ENCODE measurements at regions of chr13 and their contacts with region 1.

Region 1: GRCh38 chr13:41678249-41678648 is 220.9 kb downstream of the RGCC start:
- DNase-seq: no peak

Region 2: DNA sequence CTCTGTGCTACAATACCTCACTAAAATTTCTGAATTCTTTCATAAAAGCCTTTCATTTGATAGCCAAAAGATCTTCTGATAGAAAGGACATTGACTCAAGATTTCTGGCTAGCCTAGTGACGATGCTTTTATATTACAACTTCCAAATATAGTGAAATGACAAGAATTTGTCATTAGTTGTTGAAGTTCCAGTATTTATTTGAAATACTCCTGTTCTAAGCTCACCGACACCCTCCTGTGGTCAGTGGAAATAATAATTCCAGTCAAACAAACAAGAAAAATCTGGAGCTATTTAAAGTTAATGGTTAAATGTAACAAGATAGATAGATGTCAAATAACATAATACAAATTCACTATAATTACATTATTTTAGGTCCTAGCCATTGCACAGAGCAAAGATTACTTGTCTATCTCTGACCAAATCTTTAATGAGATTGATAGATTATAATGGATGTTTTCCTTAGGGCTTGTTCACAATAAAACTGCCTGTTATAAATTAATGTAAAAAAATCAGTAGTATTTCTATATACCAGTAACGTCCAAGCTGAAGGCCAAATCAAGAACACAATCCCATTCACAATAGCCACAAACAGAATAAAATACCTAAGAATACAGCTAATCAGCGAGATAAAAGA is 25.4 kb before region 1 on chr13:
- intact Hi-C with region 1: no loop called
- DNase-seq: no peak

Region 3: DNA sequence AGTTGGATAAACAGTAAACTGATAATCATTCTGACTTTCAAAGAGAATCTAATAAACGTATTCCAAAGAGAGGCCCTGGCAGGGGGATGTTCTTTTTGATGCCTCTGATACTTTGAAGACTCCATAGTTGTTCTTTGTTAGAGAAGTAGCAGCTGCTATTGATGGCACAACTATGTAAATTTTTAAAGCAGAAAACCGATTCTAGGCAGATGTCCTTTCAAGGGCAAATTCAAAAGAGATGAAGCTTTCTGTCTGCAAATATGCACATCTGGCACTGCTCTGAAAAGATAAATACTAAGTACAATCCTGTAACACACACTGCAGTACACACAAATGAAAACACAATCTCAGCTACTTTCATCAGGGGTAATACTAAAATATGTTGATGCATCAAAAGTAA is 32.5 kb after region 1 on chr13:
- intact Hi-C with region 1: loop called in 1 of 2 experiments (anchors 1 kb)
- DNase-seq: no peak

Region 4: DNA sequence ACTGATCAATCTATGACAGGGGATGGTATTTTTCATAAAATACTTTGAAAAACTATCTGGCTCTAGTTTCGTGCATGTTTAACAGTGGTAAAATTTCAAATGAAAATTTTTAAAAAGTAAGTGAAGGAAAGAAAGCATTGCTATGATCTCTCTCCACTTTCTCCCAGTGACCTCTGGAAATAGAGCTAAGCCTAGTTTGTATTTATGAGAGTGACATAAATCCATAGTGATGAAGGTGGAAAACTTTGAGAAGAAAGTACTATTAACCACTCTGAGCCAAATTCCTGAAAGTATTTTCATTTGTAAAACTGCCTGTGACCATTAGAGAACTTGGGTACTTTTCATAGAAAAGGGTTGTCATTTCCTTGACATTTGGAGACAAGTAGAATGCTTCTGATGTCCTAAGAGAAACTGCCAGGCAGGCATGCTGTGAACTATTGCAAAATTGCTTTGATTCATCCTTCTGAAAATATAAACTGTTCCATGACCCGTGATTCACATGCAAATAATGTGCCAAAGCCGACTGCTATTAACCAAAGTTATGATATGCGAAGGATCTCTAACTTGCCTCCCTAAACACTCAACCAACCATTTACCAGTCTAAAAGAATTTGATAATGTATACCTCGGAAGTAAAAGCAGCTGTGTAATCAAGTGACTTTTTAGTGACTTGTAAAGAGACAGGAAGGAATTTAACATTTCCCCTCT is 149.4 kb after region 1 on chr13:
- intact Hi-C with region 1: loop called in 1 of 2 experiments (anchors 10 kb)
- DNase-seq: no peak

Region 5: GRCh38 chr13:43363156-43363898 is 1685.1 kb after region 1 on chr13:
- intact Hi-C with region 1: no loop called
- DNase-seq: no peak